Transverse colon (tissue), 4 donors: ENCODE measurements at regions of chr17 and their contacts with region 1.

Region 1: DNA sequence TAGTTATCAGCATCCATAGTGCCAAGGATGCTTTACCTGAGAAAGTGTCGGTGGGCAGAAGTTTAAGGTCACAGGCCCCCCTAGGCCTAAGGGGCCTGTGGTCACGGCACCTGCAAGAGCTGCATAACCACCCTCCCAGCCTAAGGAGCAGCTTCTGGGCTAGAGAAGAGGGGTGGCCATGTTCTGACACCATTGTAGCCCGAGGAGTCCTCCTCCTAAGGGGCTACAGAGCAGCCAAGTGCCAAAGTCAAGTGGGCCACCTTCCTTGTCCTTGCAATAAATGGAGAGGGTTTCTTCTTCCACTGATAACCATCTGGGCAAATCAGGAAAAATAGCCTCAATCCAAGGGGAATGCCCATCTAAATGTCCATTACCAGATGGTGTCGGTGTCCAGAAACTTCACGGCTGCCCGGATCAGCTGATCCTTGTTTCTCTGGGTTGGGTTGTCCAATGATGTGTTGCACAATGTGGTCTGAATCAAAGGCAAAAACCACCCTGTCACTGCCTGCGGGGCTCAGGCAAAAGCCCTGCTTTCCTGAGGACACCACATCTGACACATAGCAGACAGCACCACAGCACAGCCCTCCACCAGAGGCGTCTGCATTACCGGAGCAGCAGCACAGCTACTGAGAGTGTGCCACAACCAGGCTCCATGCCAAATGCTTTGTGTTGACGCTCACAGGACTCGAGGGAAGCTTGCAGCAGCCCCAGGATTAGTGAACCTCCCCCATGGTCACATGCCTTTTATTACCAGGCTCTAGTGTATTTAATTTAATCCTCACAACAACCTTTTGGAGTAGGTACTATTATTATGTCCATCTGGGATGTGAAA is 12.8 kb downstream of the ATPAF2 start:
- DNase-seq: no peak
- H3K4me3 ChIP-seq: no peak overlapping the region
- H3K27ac ChIP-seq: no peak overlapping the region
- H3K4me1 ChIP-seq: no peaks in the 10 kb centered on the region
- H3K27me3 ChIP-seq: no peaks in the 10 kb centered on the region
- CTCF ChIP-seq: no peak
- EP300 ChIP-seq: no peak
- POLR2A ChIP-seq: no peak

Region 2: GRCh38 chr17:17675925-17676534 is 350.1 kb before region 1 on chr17:
- in situ Hi-C with region 1: loop called in 3 of 4 experiments (anchors 10 to 25 kb)
- intact Hi-C with region 1: no loop called
- DNase-seq: no peak
- H3K4me3 ChIP-seq: no peak overlapping the region
- H3K27ac ChIP-seq: no peak overlapping the region
- H3K4me1 ChIP-seq: peaks cover 0 to 6% (median 1%) of the 10 kb centered on the region in 4 donors
- H3K27me3 ChIP-seq: no peaks in the 10 kb centered on the region
- CTCF ChIP-seq: no peak
- EP300 ChIP-seq: no peak
- POLR2A ChIP-seq: no peak

Region 3: DNA sequence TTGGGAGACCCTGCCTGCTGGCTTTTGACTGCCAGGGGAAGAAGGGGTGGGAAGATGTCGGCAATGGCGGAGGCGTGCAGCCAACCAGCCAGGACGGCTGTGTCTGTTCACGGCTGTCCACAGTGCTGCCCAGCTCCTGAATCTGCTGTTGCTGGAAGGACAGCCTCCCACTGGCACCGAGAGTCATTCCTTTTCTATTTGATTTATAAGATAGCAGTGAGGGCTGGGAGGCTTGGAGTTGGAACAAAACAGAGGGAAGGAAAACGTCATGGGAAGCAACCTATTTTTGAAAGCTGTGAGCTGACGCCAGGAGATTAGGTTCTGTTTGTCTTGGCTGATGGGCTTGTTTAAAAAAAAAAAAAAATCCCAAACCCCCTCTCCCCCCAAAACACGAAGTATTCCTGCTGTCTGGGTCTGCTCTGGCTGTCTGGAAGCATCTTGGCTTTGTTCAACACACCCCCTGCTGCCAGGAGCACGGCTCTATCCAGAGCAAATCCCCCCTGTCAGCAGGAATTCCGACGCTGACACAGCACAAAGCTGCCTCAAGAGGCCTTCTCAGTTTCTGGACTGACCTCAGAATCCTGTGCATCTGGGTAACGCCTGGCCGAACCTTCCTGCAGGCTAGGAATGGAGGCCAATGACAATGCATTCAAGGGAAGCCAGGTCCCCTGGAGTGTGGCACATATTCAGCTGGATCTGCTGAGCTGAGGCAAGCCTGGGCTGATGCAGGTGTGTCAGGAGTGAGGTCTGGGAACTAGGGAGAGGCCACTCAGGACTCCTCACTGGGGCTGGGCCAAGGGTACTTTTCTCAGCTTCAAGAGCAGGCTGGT is 148.4 kb before region 1 on chr17:
- in situ Hi-C with region 1: loop called in 3 of 4 experiments (anchors 10 to 25 kb)
- intact Hi-C with region 1: no loop called
- DNase-seq: peak; percentile 55
- H3K4me3 ChIP-seq: no peak overlapping the region
- H3K27ac ChIP-seq: peak overlapping the region; percentile 63 to 92 (median 81)
- H3K4me1 ChIP-seq: peaks cover 16 to 27% (median 19%) of the 10 kb centered on the region in 4 donors
- H3K27me3 ChIP-seq: no peaks in the 10 kb centered on the region
- CTCF ChIP-seq: no peak
- EP300 ChIP-seq: no peak
- POLR2A ChIP-seq: no peak

Region 4: DNA sequence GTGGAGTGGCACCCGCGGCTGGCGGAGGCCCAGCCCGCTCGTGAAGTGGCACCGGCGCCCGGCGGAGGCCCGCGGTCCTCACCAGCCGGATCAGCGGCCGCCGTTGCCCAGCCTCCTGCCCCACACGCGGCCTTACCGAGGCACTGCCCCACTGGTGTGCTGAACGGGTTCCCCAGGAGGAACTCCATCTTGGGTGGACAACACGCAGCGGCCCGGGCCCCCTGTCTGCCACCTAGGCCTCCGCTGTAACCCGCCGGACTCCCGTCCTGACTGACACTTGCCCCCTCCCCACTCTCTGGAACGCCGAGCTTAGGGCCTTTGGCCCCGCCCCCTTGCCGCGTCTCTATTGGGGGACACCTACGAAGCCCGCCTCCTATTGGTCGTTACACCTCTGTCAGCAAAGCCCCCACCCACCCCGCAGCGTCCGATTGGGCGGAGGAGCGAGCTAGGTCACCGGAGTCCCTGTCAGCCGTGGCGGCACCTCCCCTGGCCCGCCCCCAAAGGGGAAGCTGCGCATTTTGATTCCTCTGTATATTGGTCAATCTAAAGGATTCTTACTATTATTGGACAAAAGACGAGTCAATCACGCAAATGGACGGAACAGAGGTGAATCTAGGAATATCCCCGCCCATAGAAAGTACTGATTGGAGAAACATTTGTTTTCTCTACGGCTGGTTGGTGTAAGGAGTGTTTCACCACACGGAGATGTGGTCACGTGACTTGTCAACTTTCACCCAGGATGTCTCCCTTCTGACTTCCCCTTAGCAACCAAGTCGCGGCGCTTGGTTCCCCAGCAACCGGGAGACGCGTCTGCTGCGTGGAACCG is 53.8 kb before region 1 on chr17 and contains the starts of genes DRC3 and TOM1L2:
- in situ Hi-C with region 1: loop called in 1 of 4 experiments (anchors 10 kb)
- intact Hi-C with region 1: no loop called
- DNase-seq: peak; percentile 100
- H3K4me3 ChIP-seq: peak within 1 kb of the TSS; percentile 59 to 93 (median 76)
- H3K27ac ChIP-seq: peak within 1 kb of the TSS; percentile 91 to 96 (median 94)
- H3K4me1 ChIP-seq: peaks cover 17 to 29% (median 19%) of the 10 kb centered on the region in 4 donors
- H3K27me3 ChIP-seq: no peaks in the 10 kb centered on the region
- CTCF ChIP-seq: peak in 2 of 5 experiments; percentile 4 to 13
- EP300 ChIP-seq: no peak
- POLR2A ChIP-seq: peak; percentile 93
- total RNA-seq, gene DRC3: 0.64 to 1.8 (median 0.82) TPM in 3 of 4 donors, not detected in the other
- total RNA-seq, gene TOM1L2: 65.9 to 178 (median 97.7) TPM